ENCODE measurements at regions of chr17 and their contacts with region 1.

Region 1: GRCh38 chr17:74864866-74865395 is 5.2 kb upstream of the GRIN2C start:
- DNase-seq: peak; percentile 71 to 90 (median 89)
- ATAC-seq: peak; percentile 30 to 47
- H3K4me3 ChIP-seq: no peak overlapping the region
- H3K27ac ChIP-seq: no peak overlapping the region
- H3K4me1 ChIP-seq: peaks cover 4% of the 10 kb centered on the region
- H3K27me3 ChIP-seq: no peaks in the 10 kb centered on the region

Region 2: DNA sequence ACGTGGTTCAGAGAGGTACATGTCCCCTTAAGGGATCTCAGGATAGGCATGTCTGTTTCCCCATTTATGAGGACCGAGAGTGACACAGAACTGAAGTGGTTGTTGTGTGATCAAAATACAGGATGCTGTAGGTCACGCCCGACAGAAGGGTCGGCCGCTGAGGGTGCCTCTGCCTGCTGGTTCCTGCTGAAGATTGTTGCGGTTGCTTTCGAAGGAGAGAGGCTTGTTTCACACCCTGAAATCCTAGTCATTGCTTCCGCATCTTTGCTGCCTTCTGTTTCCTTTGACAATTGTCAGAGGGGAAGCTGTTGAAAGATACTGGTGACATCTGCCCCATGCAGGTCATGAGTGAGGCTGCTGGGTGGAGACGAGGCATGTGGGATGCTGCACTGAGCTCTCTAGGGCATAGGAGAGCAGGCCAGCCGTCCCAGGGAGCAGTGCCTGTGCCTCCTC is 85.0 kb before region 1 on chr17:
- intact Hi-C with region 1: no loop called
- DNase-seq: peak in 2 of 3 donors; percentile 78 to 81
- ATAC-seq: no peak
- H3K4me3 ChIP-seq: no peak overlapping the region
- H3K27ac ChIP-seq: no peak overlapping the region
- H3K4me1 ChIP-seq: peaks cover 2% of the 10 kb centered on the region
- H3K27me3 ChIP-seq: no peaks in the 10 kb centered on the region

Region 3: DNA sequence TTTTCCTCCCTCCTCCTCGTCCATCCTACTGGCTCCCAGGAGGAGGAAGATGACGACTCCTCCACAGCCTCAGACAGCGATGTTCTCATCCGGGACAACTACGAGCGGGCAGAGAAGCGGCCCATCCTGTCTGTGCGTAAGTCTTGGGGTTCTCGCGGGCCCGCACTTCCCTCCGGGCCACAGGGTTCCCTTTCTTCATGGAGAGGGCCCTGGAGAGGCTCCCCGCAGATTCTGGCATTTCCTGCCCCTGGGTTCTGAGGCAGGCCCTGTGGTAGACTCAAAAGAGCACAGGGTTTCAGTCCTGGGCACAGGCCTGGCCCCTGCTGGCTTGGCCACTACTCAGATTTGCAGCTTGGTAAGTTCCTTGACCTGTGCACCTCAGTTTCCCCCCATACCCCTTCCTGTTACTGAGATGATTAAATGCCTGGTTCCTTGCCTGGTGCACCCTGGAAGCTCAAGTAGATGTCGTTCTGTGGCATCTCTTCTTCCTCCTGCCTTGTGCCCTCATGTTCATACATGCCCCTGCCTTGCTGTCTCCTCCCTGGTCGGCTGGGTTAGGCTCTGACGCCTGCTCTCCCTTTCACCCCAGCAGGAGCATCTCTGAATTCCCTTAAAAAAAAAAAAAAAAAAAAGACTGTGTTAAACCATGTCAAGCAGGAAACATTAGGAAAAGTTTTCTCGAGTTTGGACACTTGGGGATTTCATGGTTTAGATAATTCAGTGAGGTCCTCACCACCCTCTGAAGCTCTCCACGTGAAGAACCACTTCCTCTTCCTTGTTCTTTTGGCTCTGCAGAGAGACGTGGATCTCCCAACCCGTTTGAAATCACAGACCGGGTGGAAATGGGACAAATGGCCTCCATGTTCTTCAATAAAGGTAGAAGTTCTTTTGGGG is 74.5 kb before region 1 on chr17:
- intact Hi-C with region 1: loop called (anchors 2 to 5 kb)
- DNase-seq: no peak
- ATAC-seq: peak in 1 of 2 donors; percentile 4
- H3K4me3 ChIP-seq: no peak overlapping the region
- H3K27ac ChIP-seq: no peak overlapping the region
- H3K4me1 ChIP-seq: no peaks in the 10 kb centered on the region
- H3K27me3 ChIP-seq: no peaks in the 10 kb centered on the region

Region 4: GRCh38 chr17:74814453-74814852 is 50.5 kb before region 1 on chr17:
- intact Hi-C with region 1: loop called in 1 of 4 experiments (anchors 5 kb)
- DNase-seq: no peak
- ATAC-seq: no peak
- H3K4me3 ChIP-seq: no peak overlapping the region
- H3K27ac ChIP-seq: peak overlapping the region; percentile 19
- H3K4me1 ChIP-seq: peaks cover 9% of the 10 kb centered on the region
- H3K27me3 ChIP-seq: no peaks in the 10 kb centered on the region

Measured in right cardiac atrium (tissue), 5 donors.